Activated CD8-positive, alpha-beta memory T cell treated with anti-CD3 and anti-CD28 coated beads, Interleukin-2, amount 10 ng/mL, durations not matched to agents 7 days and 5 days (primary cell): ENCODE measurements at regions of chr1 and their contacts with region 1.

Region 1: DNA sequence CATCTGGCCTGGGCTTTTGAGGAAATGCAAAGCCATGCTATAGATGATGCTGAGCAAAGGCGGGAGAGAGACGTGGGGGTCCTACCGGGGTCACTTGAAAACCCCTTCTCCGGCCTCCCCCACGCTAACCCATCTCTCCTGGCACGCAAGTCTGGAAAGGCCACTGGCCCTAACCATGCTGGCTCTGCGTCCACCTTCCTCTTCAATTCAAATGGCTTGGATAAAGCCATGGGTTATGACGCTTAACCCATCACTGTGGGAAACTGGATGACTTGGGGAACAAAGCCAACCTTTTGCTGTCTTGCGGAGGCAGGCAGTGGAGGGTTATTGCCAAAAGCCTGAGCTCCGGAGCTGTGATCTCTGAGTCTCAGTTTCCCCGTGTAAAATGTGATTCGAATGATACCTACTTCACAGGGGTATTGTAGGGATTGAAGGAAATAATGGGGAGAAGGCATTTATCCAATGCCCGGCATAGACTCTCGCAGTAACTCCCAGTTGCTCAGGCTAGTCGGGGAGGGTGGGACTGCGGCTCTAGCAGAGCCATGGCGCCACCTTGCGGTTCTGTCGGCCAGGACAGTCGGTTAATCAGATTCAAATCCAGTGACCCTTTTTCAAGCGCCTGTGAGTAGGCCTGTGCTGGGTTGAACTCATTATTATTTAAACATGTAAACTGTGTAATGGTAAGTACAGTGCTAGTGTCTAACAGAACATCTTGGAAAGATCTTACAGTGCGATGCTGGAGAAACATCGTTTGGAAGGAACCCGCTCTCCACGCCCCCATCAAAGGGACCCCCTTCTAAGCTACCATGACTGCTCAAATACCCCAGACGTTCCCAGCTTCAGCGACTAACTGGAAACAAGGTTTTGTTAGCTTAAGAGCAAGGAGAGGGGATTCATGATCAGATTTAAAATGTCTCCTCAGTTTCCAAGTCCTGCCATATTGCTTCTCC is 20.3 kb downstream of the NEK2 start:
- DNase-seq: peak; percentile 88
- ATAC-seq: peak; percentile 94
- H3K4me3 Mint-ChIP-seq: no peak overlapping the region
- H3K27ac Mint-ChIP-seq: no peak overlapping the region
- H3K4me1 Mint-ChIP-seq: peaks cover 3% of the 10 kb centered on the region
- H3K27me3 Mint-ChIP-seq: no peaks in the 10 kb centered on the region

Region 2: DNA sequence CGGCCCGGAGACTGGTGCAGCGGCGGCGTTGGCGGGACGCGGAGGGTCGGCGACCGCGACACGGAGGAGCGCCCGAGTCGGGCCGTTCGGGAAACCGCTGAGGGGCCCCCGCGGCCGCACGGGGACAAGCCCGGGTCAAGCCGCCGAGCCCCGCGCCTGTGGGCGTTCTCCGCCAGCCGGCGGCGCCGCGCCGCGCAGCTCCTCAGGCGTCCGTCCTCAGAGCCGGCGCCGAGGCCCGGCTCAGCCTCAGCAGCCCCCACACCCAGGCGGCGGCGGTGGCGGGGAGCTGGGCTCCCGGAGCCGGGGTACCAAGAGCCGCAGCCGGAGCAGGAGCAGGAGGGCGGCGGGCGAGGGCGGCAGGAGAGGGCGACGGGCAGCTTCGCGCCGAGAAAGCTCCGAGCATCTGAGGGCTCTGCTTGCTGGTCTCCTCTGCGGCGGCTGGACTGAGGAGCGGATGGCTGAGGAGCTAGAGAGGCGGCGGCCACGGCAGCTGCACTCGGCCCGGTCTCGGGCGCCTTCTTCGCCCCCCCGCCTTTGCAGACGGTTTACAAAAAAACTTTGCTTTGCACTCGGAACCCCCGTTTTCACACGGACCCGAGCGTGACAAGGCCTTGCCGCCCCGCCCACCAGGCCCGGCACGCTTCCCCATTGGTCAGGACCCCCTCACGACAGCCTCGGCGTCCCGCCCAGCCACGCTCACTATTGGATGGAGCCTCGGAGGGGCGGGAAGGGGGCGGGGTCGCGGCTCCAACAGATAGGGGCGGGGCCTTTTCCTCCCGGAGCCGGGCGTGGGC is 76.3 kb before region 1 on chr1 and contains the start of gene SLC30A1:
- CTCF ChIA-PET with region 1: interaction called, 12 read pairs
- DNase-seq: peak; percentile 99
- ATAC-seq: peak; percentile 89
- H3K4me3 Mint-ChIP-seq: peak within 1 kb of the TSS; percentile 98
- H3K27ac Mint-ChIP-seq: peak within 1 kb of the TSS; percentile 90
- H3K4me1 Mint-ChIP-seq: peaks cover 58% of the 10 kb centered on the region
- H3K27me3 Mint-ChIP-seq: no peaks in the 10 kb centered on the region
- total RNA-seq, gene SLC30A1: 7.9 to 9.3 TPM